B cell (primary cell): ENCODE measurements at regions of chr19 and their contacts with region 1.

Region 1: GRCh38 chr19:54616821-54617560 is 13.3 kb upstream of the LILRB1 start:
- DNase-seq: peak; percentile 66
- ATAC-seq: peak; percentile 79
- H3K4me3 ChIP-seq: peak overlapping the region; percentile 52 to 86 (median 73)
- H3K4me3 Mint-ChIP-seq: peak overlapping the region; percentile 93
- H3K27ac ChIP-seq: peak overlapping the region; percentile 86 to 87
- H3K27ac Mint-ChIP-seq: peak overlapping the region; percentile 94
- H3K4me1 ChIP-seq: peaks cover 55 to 56% of the 10 kb centered on the region in 2 donors
- H3K4me1 Mint-ChIP-seq: peaks cover 82% of the 10 kb centered on the region
- H3K27me3 ChIP-seq: no peaks in the 10 kb centered on the region
- H3K27me3 Mint-ChIP-seq: no peaks in the 10 kb centered on the region
- CTCF ChIP-seq: peak; percentile 4

Region 2: GRCh38 chr19:54561840-54562239 is 55.2 kb before region 1 on chr19:
- CTCF ChIA-PET with region 1: no interaction called
- POLR2A ChIA-PET with region 1: no interaction called
- intact Hi-C with region 1: loop called (anchors 10 kb)
- DNase-seq: no peak
- ATAC-seq: no peak
- H3K4me3 ChIP-seq: no peak overlapping the region
- H3K4me3 Mint-ChIP-seq: no peak overlapping the region
- H3K27ac ChIP-seq: no peak overlapping the region
- H3K27ac Mint-ChIP-seq: no peak overlapping the region
- H3K4me1 ChIP-seq: no peaks in the 10 kb centered on the region
- H3K4me1 Mint-ChIP-seq: no peaks in the 10 kb centered on the region
- H3K27me3 ChIP-seq: peaks cover 0 to 3% (median 1%) of the 10 kb centered on the region in 4 experiments
- H3K27me3 Mint-ChIP-seq: peaks cover 19% of the 10 kb centered on the region
- CTCF ChIP-seq: no peak

Region 3: GRCh38 chr19:54630782-54631181 is 13.8 kb after region 1 on chr19:
- CTCF ChIA-PET with region 1: interaction called, 6 read pairs
- POLR2A ChIA-PET with region 1: interaction called, 4 read pairs
- intact Hi-C with region 1: loop called (anchors 2 kb)
- DNase-seq: no peak
- ATAC-seq: no peak
- H3K4me3 ChIP-seq: peak overlapping the region in 4 of 5 experiments; percentile 28 to 54 (median 34)
- H3K4me3 Mint-ChIP-seq: peak overlapping the region; percentile 88
- H3K27ac ChIP-seq: peak overlapping the region; percentile 11 to 72
- H3K27ac Mint-ChIP-seq: peak overlapping the region; percentile 97
- H3K4me1 ChIP-seq: peaks cover 54% of the 10 kb centered on the region in 2 donors
- H3K4me1 Mint-ChIP-seq: peaks cover 52% of the 10 kb centered on the region
- H3K27me3 ChIP-seq: no peaks in the 10 kb centered on the region
- H3K27me3 Mint-ChIP-seq: no peaks in the 10 kb centered on the region
- CTCF ChIP-seq: no peak

Region 4: DNA sequence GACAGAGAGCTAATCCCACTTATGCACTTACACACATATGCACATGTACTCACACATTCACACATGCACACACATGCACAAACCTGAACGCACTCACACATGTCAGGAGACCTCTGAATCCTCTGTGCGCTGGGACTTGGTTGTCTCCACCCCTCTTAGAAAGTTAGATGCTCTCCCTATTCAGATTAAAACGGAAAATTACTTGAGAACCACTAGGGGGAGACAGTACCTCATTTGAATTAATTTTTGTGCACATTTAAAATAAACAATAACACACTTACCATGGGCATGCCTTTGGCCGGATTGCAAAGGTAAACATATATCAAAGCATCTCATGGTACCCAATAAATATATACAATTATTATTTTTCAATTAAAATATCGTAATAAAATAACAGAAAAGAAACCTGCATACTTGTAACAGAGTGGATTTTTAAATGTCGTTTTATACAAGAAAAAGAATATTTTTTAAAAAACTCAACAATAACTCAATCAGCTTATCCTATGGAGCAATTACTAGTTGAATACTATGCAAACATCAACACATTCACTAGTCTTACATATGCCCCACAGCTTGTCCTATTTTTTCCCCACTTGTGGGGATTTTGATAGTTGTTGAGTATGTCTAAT is 36.3 kb after region 1 on chr19:
- CTCF ChIA-PET with region 1: interaction called, 28 read pairs
- POLR2A ChIA-PET with region 1: interaction called, 4 read pairs
- intact Hi-C with region 1: loop called (anchors 5 kb)
- DNase-seq: peak; percentile 62
- ATAC-seq: peak; percentile 36
- H3K4me3 ChIP-seq: no peak overlapping the region
- H3K4me3 Mint-ChIP-seq: no peak overlapping the region
- H3K27ac ChIP-seq: no peak overlapping the region
- H3K27ac Mint-ChIP-seq: no peak overlapping the region
- H3K4me1 ChIP-seq: peaks cover 3% of the 10 kb centered on the region in 2 donors
- H3K4me1 Mint-ChIP-seq: peaks cover 9% of the 10 kb centered on the region
- H3K27me3 ChIP-seq: no peaks in the 10 kb centered on the region
- H3K27me3 Mint-ChIP-seq: no peaks in the 10 kb centered on the region
- CTCF ChIP-seq: peak; percentile 89